B cell (primary cell): ENCODE measurements at regions of chr16 and their contacts with region 1.

Region 1: DNA sequence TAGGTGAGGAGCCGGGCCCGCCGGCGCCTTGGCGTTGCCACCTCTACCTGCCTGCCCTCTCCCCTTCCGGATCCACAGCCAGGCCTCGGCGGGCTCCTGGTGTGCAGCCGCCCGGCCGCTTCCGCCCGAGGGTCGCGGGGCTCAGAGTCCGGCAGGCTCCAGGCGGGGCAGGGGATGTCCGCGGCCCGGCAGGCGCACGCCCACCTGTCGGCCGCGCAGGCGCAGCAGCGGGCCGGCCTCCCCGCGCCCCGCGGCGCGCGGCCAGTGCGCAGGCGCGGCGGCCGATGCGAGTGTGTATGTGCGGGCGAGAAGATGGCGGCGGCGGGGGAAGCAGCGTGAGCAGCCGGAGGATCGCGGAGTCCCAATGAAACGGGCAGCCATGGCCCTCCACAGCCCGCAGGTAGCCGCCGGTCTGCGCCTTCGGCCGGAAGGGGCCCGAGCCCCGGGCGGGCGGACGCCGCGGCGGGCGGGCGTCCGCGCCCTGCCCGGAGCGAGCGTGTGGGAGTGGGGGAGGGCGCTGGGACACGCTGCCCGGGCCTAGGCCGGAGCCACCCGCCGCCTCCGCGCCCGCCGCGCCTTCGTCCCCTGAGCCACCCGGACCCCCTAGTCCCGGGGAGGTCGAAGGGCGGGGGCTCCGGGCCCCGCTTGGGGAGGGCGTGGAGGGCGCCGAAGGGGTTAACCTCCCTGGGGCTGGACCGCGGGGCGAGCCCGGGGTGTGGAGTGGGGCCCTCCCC is at the start of gene USP10:
- DNase-seq: peak; percentile 94
- ATAC-seq: peak; percentile 78
- H3K4me3 ChIP-seq: peak within 1 kb of the TSS; percentile 71 to 88 (median 80)
- H3K4me3 Mint-ChIP-seq: peak within 1 kb of the TSS; percentile 99
- H3K27ac ChIP-seq: peak within 1 kb of the TSS; percentile 69 to 91
- H3K27ac Mint-ChIP-seq: peak within 1 kb of the TSS; percentile 98
- H3K4me1 ChIP-seq: peaks cover 13 to 37% of the 10 kb centered on the region in 2 donors
- H3K4me1 Mint-ChIP-seq: peaks cover 41% of the 10 kb centered on the region
- H3K27me3 ChIP-seq: no peaks in the 10 kb centered on the region
- H3K27me3 Mint-ChIP-seq: no peaks in the 10 kb centered on the region
- CTCF ChIP-seq: no peak
- total RNA-seq, gene USP10: 130 and 134 TPM in 2 replicates

Region 2: GRCh38 chr16:84647828-84648594 is 51.9 kb before region 1 on chr16 and contains the start of gene KLHL36:
- CTCF ChIA-PET with region 1: interaction called, 3 read pairs
- POLR2A ChIA-PET with region 1: no interaction called
- intact Hi-C with region 1: loop called (anchors 5 kb)
- DNase-seq: peak; percentile 83
- ATAC-seq: peak; percentile 90
- H3K4me3 ChIP-seq: peak within 1 kb of the TSS; percentile 42 to 75 (median 70)
- H3K4me3 Mint-ChIP-seq: peak within 1 kb of the TSS; percentile 92
- H3K27ac ChIP-seq: peak within 1 kb of the TSS; percentile 56 to 83
- H3K27ac Mint-ChIP-seq: peak within 1 kb of the TSS; percentile 92
- H3K4me1 ChIP-seq: peaks cover 34 to 44% of the 10 kb centered on the region in 2 donors
- H3K4me1 Mint-ChIP-seq: peaks cover 51% of the 10 kb centered on the region
- H3K27me3 ChIP-seq: no peaks in the 10 kb centered on the region
- H3K27me3 Mint-ChIP-seq: no peaks in the 10 kb centered on the region
- CTCF ChIP-seq: no peak
- total RNA-seq, gene KLHL36: 133 and 135 TPM in 2 replicates

Region 3: GRCh38 chr16:84663433-84664101 is 36.3 kb before region 1 on chr16:
- CTCF ChIA-PET with region 1: interaction called, 5 read pairs
- POLR2A ChIA-PET with region 1: interaction called, 3 read pairs
- intact Hi-C with region 1: loop called (anchors 2 kb)
- DNase-seq: peak; percentile 61
- ATAC-seq: peak; percentile 93
- H3K4me3 ChIP-seq: peak overlapping the region in 1 of 5 experiments; percentile 20
- H3K4me3 Mint-ChIP-seq: peak overlapping the region; percentile 78
- H3K27ac ChIP-seq: peak overlapping the region in 1 of 2 donors; percentile 16
- H3K27ac Mint-ChIP-seq: peak overlapping the region; percentile 69
- H3K4me1 ChIP-seq: peaks cover 23 to 24% of the 10 kb centered on the region in 2 donors
- H3K4me1 Mint-ChIP-seq: peaks cover 29% of the 10 kb centered on the region
- H3K27me3 ChIP-seq: no peaks in the 10 kb centered on the region
- H3K27me3 Mint-ChIP-seq: no peaks in the 10 kb centered on the region
- CTCF ChIP-seq: no peak

Region 4: DNA sequence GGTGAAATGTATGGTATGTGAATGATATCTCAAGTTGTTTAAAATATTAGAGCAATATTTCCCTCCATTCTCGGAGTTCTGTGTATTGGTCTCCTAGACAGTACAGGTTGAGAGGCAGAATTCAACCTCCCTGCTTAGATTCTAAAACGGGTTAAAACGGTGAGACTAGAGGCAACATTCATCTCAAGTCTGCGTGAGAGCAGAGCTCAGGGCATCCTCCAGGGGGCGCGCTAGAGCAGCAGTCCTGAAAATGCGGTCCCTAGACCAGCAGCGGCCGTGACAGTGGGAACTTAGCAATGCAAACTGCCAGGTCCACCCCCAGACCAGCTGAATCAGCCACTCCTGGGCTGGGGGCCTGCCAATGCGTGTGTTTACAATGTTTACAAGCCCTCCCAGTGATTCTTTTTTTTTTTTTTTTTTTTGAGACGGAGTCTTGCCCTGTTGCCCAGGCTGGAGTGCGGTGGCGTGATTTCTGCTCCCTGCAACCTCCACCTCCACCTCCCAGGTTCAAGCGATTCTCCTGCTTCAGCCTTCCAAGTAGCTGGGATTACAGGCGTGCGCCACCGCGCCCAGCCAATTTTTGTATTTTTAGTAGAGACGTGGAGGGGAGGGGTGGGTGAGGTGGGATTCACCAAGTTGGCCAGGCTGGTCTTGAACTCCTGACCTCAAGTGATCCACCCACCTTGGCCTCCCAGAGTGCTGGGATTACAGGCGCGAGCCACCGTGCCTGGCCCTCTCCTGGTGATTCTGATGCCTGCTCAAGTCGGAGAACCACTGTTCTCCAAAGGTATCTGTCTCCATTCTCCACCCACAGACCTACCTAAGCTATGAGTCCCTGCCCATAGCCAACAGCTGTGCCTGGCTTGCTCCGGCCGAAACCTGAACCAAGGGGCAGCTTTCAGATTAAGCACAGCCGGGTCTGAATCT is 27.3 kb before region 1 on chr16:
- CTCF ChIA-PET with region 1: interaction called, 13 read pairs
- POLR2A ChIA-PET with region 1: no interaction called
- intact Hi-C with region 1: loop called (anchors 2 kb)
- DNase-seq: peak; percentile 82
- ATAC-seq: peak; percentile 96
- H3K4me3 ChIP-seq: no peak overlapping the region
- H3K4me3 Mint-ChIP-seq: no peak overlapping the region
- H3K27ac ChIP-seq: no peak overlapping the region
- H3K27ac Mint-ChIP-seq: peak overlapping the region; percentile 28
- H3K4me1 ChIP-seq: peaks cover 0 to 15% of the 10 kb centered on the region in 2 donors
- H3K4me1 Mint-ChIP-seq: peaks cover 10% of the 10 kb centered on the region
- H3K27me3 ChIP-seq: no peaks in the 10 kb centered on the region
- H3K27me3 Mint-ChIP-seq: peaks cover 3% of the 10 kb centered on the region
- CTCF ChIP-seq: peak; percentile 91

Region 5: GRCh38 chr16:84687715-84688114 is 12.2 kb before region 1 on chr16:
- CTCF ChIA-PET with region 1: interaction called, 5 read pairs
- POLR2A ChIA-PET with region 1: interaction called, 3 read pairs
- intact Hi-C with region 1: loop called (anchors 1 kb)
- DNase-seq: peak; percentile 72
- ATAC-seq: peak; percentile 97
- H3K4me3 ChIP-seq: no peak overlapping the region
- H3K4me3 Mint-ChIP-seq: peak overlapping the region; percentile 74
- H3K27ac ChIP-seq: no peak overlapping the region
- H3K27ac Mint-ChIP-seq: peak overlapping the region; percentile 85
- H3K4me1 ChIP-seq: peaks cover 10 to 17% of the 10 kb centered on the region in 2 donors
- H3K4me1 Mint-ChIP-seq: peaks cover 21% of the 10 kb centered on the region
- H3K27me3 ChIP-seq: no peaks in the 10 kb centered on the region
- H3K27me3 Mint-ChIP-seq: peaks cover 7% of the 10 kb centered on the region
- CTCF ChIP-seq: no peak